CD4-positive, alpha-beta memory T cell (primary cell): ENCODE measurements at regions of chr7 and their contacts with region 1.

Region 1: DNA sequence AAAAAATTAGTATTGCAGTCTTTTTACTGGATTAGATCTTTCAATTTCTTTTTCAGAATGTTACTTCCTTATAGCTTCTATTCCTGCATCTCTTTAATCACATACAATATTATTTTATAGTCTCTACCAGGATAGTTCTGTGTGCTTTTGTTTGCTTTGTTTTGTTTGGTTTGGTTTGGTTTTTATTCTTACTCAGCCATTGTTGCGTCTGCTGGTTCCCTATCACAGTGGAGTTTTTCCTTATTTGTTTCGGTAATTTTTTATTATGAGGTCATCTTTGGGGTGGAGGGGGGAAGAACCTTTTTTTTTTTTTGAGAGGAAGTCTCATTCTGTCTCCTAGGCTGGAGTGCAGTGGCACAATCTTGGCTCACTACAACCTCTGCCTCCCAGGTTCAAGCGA is 9.0 kb upstream of the BAIAP2L1 start:
- DNase-seq: no peak
- H3K4me3 ChIP-seq: no peak overlapping the region
- H3K4me3 Mint-ChIP-seq: no peak overlapping the region
- H3K27ac ChIP-seq: no peak overlapping the region
- H3K27ac Mint-ChIP-seq: no peak overlapping the region
- H3K4me1 ChIP-seq: no peaks in the 10 kb centered on the region
- H3K4me1 Mint-ChIP-seq: no peaks in the 10 kb centered on the region
- H3K27me3 ChIP-seq: no peaks in the 10 kb centered on the region
- H3K27me3 Mint-ChIP-seq: peaks cover 1 to 6% of the 10 kb centered on the region in 2 donors

Region 2: DNA sequence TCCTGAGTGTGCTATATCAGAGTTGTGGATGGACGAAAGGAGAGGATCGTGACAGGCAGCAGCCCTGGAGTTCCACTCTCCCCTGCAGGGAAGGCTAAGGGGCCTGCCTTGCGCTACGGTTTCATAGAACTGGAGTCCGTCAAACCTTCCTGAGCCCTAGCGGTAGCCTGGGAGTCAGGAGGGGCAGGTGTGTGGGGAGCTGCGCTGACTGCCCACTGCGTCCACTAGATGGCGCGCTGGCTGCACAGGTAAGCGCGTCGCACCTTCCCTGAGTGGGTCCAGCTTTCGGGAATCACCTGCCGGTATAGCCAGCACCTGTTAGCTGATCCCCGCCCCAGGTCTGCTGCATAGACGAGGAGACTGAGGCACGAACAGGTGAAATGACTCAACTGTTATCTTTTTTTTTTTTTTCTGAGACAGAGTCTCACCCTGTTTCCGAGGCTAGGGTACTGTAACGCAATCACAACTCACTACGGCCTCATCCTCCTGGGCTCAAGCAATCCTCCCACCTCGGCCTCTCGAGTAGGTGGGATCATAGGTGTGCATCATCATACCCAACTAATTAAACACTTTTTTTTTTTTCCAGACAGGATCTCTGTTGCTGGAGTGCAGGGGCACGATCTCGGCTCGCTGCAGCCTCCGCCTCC is 11.2 kb after region 1 on chr7:
- CTCF ChIA-PET with region 1: interaction called, 10 read pairs
- POLR2A ChIA-PET with region 1: no interaction called
- intact Hi-C with region 1: no loop called
- DNase-seq: peak; percentile 43 to 56 (median 49)
- H3K4me3 ChIP-seq: no peak overlapping the region
- H3K4me3 Mint-ChIP-seq: peak overlapping the region in 1 of 8 donors; percentile 29
- H3K27ac ChIP-seq: no peak overlapping the region
- H3K27ac Mint-ChIP-seq: no peak overlapping the region
- H3K4me1 ChIP-seq: peaks cover 6% of the 10 kb centered on the region
- H3K4me1 Mint-ChIP-seq: peaks cover 0 to 4% (median 2%) of the 10 kb centered on the region in 4 donors
- H3K27me3 ChIP-seq: no peaks in the 10 kb centered on the region
- H3K27me3 Mint-ChIP-seq: peaks cover 11 to 13% of the 10 kb centered on the region in 2 donors